AG04449 (cell line): ENCODE measurements at regions of chr16 and their contacts with region 1.

Region 1: DNA sequence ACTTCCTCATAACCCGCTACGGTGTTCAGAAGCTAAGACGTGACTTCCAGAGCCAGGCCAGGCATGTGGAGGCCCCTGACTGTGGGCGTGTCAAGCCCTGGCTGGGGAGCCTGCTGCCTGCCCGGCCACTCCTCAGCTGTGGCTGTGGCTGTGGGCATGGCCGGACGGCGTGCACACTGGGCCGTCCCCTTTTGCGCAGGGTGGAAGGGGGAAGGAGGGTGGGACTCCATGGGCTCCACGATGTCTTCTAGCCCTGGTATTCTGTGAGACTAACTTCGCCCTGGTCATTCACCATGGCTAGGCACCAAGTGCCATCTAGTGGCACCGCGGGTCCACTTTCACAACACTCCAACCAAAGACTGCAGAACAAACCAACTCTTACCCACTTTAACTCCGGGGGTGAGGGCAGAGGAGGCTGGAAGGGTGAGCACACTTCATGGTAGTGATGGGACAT is 67.9 kb downstream of the N4BP1 start:
- DNase-seq: no peak
- H3K4me3 ChIP-seq: no peak overlapping the region
- CTCF ChIP-seq: peak; percentile 66

Region 2: GRCh38 chr16:48330841-48331192 is 211.2 kb before region 1 on chr16:
- CTCF ChIA-PET with region 1: no interaction called
- POLR2A ChIA-PET with region 1: no interaction called
- DNase-seq: no peak
- H3K4me3 ChIP-seq: no peak overlapping the region
- CTCF ChIP-seq: no peak

Region 3: DNA sequence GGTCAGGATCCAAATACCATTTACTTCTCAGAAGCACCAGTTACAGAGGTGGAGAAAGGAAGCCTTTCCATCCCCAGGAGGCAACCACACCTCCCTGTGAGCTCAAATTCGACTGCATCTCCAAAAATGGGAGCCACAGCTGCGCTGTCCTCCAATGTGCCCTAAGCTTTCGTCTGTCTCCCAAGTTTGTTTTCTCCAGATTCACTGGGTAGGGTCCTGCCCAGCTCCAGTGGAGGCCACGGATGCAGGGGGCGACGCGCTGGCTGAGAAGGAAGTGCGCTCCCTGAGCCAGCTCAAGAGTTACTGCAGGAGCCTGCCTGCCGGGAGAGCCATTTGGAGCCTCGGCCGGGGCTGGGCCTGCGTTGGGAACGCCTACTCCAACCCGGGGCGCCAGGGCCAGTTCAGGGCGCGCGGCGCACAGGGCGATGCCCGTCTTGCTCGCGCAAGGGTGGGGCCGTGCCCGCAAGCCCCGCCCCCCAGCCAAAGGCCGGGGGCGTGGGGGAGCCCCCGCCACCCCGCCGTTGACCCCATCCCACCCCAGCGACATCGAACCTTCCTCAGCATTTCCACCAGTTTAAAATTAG is 176.4 kb before region 1 on chr16:
- CTCF ChIA-PET with region 1: interaction called, 12 read pairs
- POLR2A ChIA-PET with region 1: no interaction called
- DNase-seq: peak; percentile 19
- H3K4me3 ChIP-seq: peak overlapping the region; percentile 61
- CTCF ChIP-seq: peak; percentile 10